ENCODE measurements at regions of chr4 and their contacts with region 1.

Region 1: DNA sequence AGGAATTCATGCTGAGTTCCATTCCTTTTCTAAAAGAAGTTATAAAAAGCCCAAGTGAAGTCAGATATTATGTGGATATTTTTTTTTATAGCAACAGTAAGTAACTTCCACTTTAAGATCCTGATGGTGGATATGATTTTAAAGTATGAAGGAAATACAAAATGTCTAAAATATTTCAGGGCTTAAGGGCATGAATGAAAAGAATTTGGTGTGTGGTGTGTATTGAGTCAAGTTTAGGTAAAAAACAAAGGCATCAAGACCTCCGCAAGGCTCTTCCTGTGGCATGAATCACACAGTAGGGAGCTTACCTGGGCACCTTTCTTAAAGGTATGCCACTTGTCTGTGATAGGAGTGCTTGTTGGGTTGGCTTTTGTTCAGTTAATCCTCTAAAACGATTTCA is 262.5 kb upstream of the AADAT start:
- DNase-seq: no peak
- H3K4me3 ChIP-seq: no peak overlapping the region
- H3K27ac ChIP-seq: no peak overlapping the region
- H3K4me1 ChIP-seq: no peaks in the 10 kb centered on the region
- H3K27me3 ChIP-seq: no peaks in the 10 kb centered on the region
- CTCF ChIP-seq: no peak

Region 2: GRCh38 chr4:170278460-170278859 is 73.8 kb before region 1 on chr4:
- CTCF ChIA-PET with region 1: no interaction called
- POLR2A ChIA-PET with region 1: interaction called, 16 read pairs
- intact Hi-C with region 1: no loop called
- DNase-seq: no peak
- H3K4me3 ChIP-seq: no peak overlapping the region
- H3K27ac ChIP-seq: no peak overlapping the region
- H3K4me1 ChIP-seq: no peaks in the 10 kb centered on the region
- H3K27me3 ChIP-seq: peaks cover 15% of the 10 kb centered on the region
- CTCF ChIP-seq: no peak

Measured in A673 (cell line).